ENCODE measurements at regions of chr15 and their contacts with region 1.

Region 1: GRCh38 chr15:94346282-94346681 is 114.9 kb downstream of the MCTP2 start:
- DNase-seq: no peak
- ATAC-seq: no peak
- H3K4me3 ChIP-seq: no peak overlapping the region
- H3K27ac ChIP-seq: no peak overlapping the region
- H3K4me1 ChIP-seq: no peaks in the 10 kb centered on the region
- H3K27me3 ChIP-seq: no peaks in the 10 kb centered on the region
- CTCF ChIP-seq: no peak
- EP300 ChIP-seq: no peak
- POLR2A ChIP-seq: no peak
- RAD21 ChIP-seq: no peak

Region 2: DNA sequence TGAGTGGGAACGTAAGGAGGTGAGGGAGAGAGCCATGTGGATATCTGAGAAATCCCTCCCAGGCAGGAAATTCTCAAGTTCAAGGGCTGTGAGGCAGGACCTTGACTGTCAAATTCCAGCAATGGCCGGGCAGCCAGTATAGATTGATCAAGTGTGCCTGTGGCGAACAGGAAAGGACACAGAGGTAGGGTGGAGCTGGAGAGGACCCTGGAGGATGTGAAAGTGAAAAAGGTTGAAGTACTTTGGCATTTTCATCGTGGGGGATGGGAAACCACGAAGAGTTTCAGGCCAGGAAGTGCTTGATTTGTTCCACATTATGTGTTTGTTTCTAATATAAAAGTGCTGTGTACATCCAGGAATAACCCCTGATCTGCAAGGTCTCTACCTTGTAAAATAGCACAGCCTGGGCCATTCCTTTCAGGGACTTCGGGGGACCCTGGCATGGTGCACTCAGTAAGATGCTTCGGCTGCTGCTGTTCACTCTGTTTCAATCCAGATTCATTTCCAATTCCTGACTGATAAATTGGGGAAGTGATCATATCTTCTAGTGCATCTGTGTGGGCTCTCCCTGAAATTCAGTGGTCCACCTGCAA is 41.7 kb after region 1 on chr15:
- CTCF ChIA-PET with region 1: no interaction called
- POLR2A ChIA-PET with region 1: no interaction called
- in situ Hi-C with region 1: no loop called
- intact Hi-C with region 1: loop called (anchors 2 kb)
- DNase-seq: no peak
- ATAC-seq: no peak
- H3K4me3 ChIP-seq: no peak overlapping the region
- H3K27ac ChIP-seq: no peak overlapping the region
- H3K4me1 ChIP-seq: no peaks in the 10 kb centered on the region
- H3K27me3 ChIP-seq: no peaks in the 10 kb centered on the region
- CTCF ChIP-seq: no peak
- EP300 ChIP-seq: no peak
- POLR2A ChIP-seq: no peak
- RAD21 ChIP-seq: no peak